Dorsolateral prefrontal cortex (tissue), 120 donors: ENCODE measurements at regions of chr4 and their contacts with region 1.

Region 1: GRCh38 chr4:42197341-42197740 is 44.9 kb upstream of the BEND4 start:
- DNase-seq: no peak
- H3K4me3 ChIP-seq: no peak overlapping the region
- H3K27ac ChIP-seq: no peak overlapping the region
- H3K27me3 ChIP-seq: peaks cover 0 to 5% (median 0%) of the 10 kb centered on the region in 45 donors
- CTCF ChIP-seq: no peak

Region 2: DNA sequence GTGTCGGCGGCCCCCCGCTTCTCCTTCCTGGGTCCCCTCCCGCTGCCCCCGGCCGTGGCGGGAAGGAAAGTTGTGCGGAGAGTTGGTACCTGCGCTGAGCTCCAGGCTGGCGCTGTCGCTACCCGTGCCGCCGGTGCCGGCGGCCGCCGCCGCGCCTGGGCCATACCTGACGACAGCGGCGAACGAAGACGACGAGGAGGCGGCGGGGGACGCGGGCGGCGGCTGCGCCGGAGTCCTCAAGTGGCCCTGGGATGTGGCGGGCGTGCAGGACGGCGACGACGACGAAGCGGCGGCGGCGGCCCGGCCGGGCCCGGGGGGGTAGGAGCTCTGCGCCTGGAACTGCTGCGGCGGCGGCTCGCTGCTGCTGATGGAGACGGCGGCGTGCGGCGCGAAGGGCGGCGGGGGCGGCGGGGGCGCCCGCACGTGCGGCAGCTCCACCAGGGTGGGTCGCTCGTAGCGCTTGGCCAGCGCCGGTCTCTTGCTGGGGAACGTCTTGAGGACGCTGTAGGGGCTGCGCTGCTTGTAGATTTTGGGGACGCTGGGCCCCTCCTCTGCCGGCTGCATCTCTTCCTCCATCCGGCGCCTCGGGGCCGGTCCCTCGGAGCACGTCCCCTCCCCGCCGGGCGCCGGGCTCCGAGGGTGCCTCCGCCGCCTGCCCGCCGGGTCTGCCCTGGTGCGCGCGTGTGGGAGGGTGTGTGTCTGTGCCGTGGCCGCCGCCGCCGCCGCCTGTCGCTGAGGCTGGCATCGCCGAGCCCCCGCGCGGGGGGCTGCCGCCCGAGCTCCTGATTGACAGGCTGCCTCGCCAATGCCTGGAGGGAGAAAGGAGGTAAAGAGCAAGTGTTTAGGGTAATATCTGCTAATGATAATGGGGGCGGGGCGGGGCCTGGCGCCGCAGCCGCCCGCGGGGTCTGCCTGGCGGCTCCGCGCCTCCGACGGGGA is 45.5 kb before region 1 on chr4:
- intact Hi-C with region 1: loop called in 1 of 2 experiments (anchors 2 kb)
- DNase-seq: peak in 3 of 10 donors; percentile 28 to 48 (median 30)
- H3K4me3 ChIP-seq: peak overlapping the region; percentile 26 to 76 (median 59)
- H3K27ac ChIP-seq: peak overlapping the region in 2 of 59 donors; percentile 25 to 36
- H3K27me3 ChIP-seq: peaks cover 0 to 59% (median 33%) of the 10 kb centered on the region in 45 donors
- CTCF ChIP-seq: no peak

Region 3: DNA sequence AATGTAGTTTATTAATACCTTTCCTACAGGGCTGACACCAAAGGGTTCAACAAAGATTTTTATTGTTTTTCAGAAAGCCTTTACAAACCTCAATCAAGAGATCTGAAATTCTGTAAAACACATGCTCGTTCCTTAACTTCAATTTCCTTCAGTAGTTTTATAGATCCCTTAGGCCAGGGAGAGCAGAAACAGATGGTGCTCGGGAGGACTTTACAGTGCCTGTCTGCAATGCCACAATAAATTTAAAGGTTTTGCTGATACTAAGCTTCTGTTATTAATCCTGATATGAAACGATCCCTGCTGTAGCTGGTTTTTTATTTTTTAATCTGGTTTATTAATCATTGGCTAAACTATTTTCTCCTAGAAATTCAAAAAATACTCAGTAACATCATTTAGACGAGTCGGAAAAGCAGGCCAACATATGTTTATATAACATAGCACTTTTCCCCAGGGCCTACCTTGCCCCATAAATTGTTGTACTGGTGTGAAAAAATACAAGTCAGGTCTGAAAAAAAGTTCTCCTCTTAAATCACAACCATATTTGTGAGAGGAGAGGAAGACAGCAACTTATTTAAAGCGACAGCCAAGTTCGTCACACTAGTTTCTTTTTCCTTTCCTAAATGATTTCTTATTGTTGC is 239.7 kb after region 1 on chr4:
- intact Hi-C with region 1: no loop called
- DNase-seq: no peak
- H3K4me3 ChIP-seq: no peak overlapping the region
- H3K27ac ChIP-seq: no peak overlapping the region
- H3K27me3 ChIP-seq: no peaks in the 10 kb centered on the region
- CTCF ChIP-seq: no peak